Activated T-helper 2 cell treated with anti-CD3 and anti-CD28 coated beads, Interferon-gamma antibody, Interleukin-2, Interleukin-4, amounts not matched to agents 10 μg/mL and 5 μg/mL and 100 μg/mL, durations not matched to agents 14 hours and 24 hours and 36 hours (primary cell): ENCODE measurements at regions of chr10 and their contacts with region 1.

Region 1: GRCh38 chr10:22369434-22370072 is 24.3 kb downstream of the SPAG6 start:
- DNase-seq: no peak
- H3K4me3 Mint-ChIP-seq: no peak overlapping the region
- H3K27ac Mint-ChIP-seq: no peak overlapping the region
- H3K4me1 Mint-ChIP-seq: peaks cover 42% of the 10 kb centered on the region
- H3K27me3 Mint-ChIP-seq: no peaks in the 10 kb centered on the region

Region 2: GRCh38 chr10:21899736-21900135 is 469.8 kb before region 1 on chr10:
- intact Hi-C with region 1: no loop called
- DNase-seq: no peak
- H3K4me3 Mint-ChIP-seq: no peak overlapping the region
- H3K27ac Mint-ChIP-seq: no peak overlapping the region
- H3K4me1 Mint-ChIP-seq: peaks cover 4% of the 10 kb centered on the region
- H3K27me3 Mint-ChIP-seq: no peaks in the 10 kb centered on the region

Region 3: GRCh38 chr10:22308390-22308789 is 61.2 kb before region 1 on chr10:
- intact Hi-C with region 1: loop called (anchors 1 kb)
- DNase-seq: peak; percentile 34
- H3K4me3 Mint-ChIP-seq: no peak overlapping the region
- H3K27ac Mint-ChIP-seq: no peak overlapping the region
- H3K4me1 Mint-ChIP-seq: peaks cover 17% of the 10 kb centered on the region
- H3K27me3 Mint-ChIP-seq: no peaks in the 10 kb centered on the region